Gastrocnemius medialis (tissue), 4 donors: ENCODE measurements at regions of chr12 and their contacts with region 1.

Region 1: GRCh38 chr12:108731105-108731865 is at the start of gene CORO1C:
- DNase-seq: peak; percentile 96 to 98
- ATAC-seq: peak; percentile 66 to 73
- H3K4me3 ChIP-seq: peak within 1 kb of the TSS; percentile 91 to 99 (median 96)
- H3K27ac ChIP-seq: peak within 1 kb of the TSS; percentile 96 to 100 (median 100)
- H3K4me1 ChIP-seq: peaks cover 34 to 38% of the 10 kb centered on the region in 2 donors
- H3K27me3 ChIP-seq: no peaks in the 10 kb centered on the region
- CTCF ChIP-seq: peak; percentile 82 to 97 (median 96)
- POLR2A ChIP-seq: peak; percentile 99 to 100
- total RNA-seq, gene CORO1C: 24.7 to 47.6 (median 30.9) TPM

Region 2: GRCh38 chr12:108664338-108665258 is 66.7 kb before region 1 on chr12:
- in situ Hi-C with region 1: loop called in 1 of 4 experiments (anchors 10 kb)
- intact Hi-C with region 1: loop called (anchors 1 kb)
- DNase-seq: peak; percentile 84 to 92
- ATAC-seq: peak; percentile 86 to 97
- H3K4me3 ChIP-seq: peak overlapping the region in 1 of 4 donors; percentile 12
- H3K27ac ChIP-seq: peak overlapping the region; percentile 79 to 84 (median 84)
- H3K4me1 ChIP-seq: peaks cover 51 to 57% of the 10 kb centered on the region in 2 donors
- H3K27me3 ChIP-seq: no peaks in the 10 kb centered on the region
- CTCF ChIP-seq: peak; percentile 93 to 98 (median 95)
- POLR2A ChIP-seq: no peak

Region 3: GRCh38 chr12:108773798-108774788 is 42.8 kb after region 1 on chr12:
- in situ Hi-C with region 1: no loop called
- intact Hi-C with region 1: loop called (anchors 2 kb)
- DNase-seq: peak; percentile 88 to 94
- ATAC-seq: peak; percentile 86 to 90
- H3K4me3 ChIP-seq: no peak overlapping the region
- H3K27ac ChIP-seq: peak overlapping the region; percentile 80 to 86 (median 84)
- H3K4me1 ChIP-seq: peaks cover 36 to 45% of the 10 kb centered on the region in 2 donors
- H3K27me3 ChIP-seq: no peaks in the 10 kb centered on the region
- CTCF ChIP-seq: no peak
- POLR2A ChIP-seq: peak; percentile 8 to 27

Region 4: GRCh38 chr12:108803428-108804105 is 72.3 kb after region 1 on chr12:
- in situ Hi-C with region 1: no loop called
- intact Hi-C with region 1: loop called (anchors 1 kb)
- DNase-seq: peak; percentile 69 to 80
- ATAC-seq: peak; percentile 61 to 70
- H3K4me3 ChIP-seq: peak overlapping the region in 1 of 4 donors; percentile 11
- H3K27ac ChIP-seq: peak overlapping the region; percentile 93 to 97 (median 96)
- H3K4me1 ChIP-seq: peaks cover 62% of the 10 kb centered on the region in 2 donors
- H3K27me3 ChIP-seq: no peaks in the 10 kb centered on the region
- CTCF ChIP-seq: peak; percentile 93 to 97 (median 95)
- POLR2A ChIP-seq: peak in 1 of 2 donors; percentile 11

Region 5: DNA sequence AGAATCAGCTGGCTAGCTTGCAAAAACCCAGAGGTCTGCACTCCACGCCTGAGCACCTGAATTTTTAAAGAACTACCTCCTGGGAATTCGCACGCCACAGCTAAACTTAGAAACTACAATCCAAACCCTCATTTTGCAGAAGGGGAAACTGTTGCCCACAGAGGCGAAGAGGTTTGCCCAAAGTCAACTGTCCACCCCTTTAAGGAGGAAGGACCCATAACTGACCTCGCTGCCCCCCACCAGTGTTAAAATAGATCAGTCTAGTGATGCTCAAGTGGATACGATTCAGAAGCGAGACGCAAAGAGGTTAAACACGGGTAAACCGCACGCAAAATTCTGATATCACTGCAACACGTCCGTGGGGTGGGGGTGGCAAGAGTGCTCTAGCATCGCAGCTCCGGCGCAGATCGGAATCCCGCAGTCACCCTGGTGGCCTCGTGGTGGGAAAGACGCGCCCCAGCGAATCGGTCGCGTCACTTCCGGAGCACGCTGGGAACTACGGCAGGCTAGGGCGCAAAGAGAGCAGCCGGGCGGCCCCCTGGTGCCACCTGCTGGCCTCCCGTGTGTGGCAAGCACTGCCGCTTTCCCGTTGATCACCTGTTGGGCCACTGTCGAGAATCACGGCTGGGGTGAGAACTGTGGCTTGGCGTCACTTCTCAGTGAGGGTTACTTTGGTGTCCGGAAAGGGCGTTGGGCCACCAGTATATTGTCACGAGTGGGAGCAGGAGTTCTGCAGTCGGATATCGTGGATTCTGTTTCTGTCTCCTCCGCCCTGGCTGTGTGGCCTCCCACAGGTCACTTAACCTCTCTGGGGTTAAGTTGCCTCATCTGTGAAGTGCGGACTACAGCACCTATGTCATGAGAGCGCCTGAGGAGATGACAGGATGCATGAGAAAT is 362.0 kb after region 1 on chr12 and contains the start of gene ALKBH2:
- in situ Hi-C with region 1: no loop called
- intact Hi-C with region 1: loop called (anchors 5 kb)
- DNase-seq: peak; percentile 89 to 92
- ATAC-seq: peak; percentile 69 to 72
- H3K4me3 ChIP-seq: peak within 1 kb of the TSS; percentile 61 to 93 (median 64)
- H3K27ac ChIP-seq: peak within 1 kb of the TSS; percentile 79 to 88 (median 81)
- H3K4me1 ChIP-seq: peaks cover 22 to 23% of the 10 kb centered on the region in 2 donors
- H3K27me3 ChIP-seq: no peaks in the 10 kb centered on the region
- CTCF ChIP-seq: peak; percentile 93 to 99 (median 97)
- POLR2A ChIP-seq: peak; percentile 52 to 77
- total RNA-seq, gene ALKBH2: 8.7 to 22.5 (median 18.2) TPM